ENCODE measurements at regions of chr19 and their contacts with region 1.

Region 1: DNA sequence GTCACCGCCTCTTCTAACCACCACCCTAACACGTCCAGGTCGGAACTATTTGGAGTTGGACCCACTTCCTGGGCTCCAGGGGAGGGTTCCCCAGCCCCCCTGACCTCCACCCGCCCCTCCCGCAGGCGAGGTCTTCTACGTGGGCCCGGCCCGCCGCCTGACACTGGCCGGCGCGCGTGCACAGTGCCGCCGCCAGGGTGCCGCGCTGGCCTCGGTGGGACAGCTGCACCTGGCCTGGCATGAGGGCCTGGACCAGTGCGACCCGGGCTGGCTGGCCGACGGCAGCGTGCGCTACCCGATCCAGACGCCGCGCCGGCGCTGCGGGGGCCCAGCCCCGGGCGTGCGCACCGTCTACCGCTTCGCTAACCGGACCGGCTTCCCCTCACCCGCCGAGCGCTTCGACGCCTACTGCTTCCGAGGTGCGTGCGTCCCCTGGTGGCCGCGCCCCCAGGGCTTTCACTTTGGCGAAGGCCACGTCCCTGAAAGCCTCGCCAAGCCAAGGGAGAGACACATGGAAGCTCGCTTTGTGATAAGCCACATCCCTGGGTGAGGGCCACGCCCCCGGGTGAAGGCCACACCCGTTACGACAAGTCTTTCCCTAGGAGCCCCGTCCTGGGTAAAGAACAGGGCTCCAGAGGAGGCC is 13.2 kb downstream of the NCAN start:
- DNase-seq: peak; percentile 74 to 78 (median 76)
- H3K4me3 ChIP-seq: peak overlapping the region in 1 of 2 donors; percentile 49
- H3K4me3 Mint-ChIP-seq: peak overlapping the region; percentile 70 to 93 (median 76)
- H3K27ac ChIP-seq: no peak overlapping the region
- H3K27ac Mint-ChIP-seq: peak overlapping the region in 2 of 7 donors; percentile 10 to 70
- H3K4me1 ChIP-seq: peaks cover 10% of the 10 kb centered on the region
- H3K4me1 Mint-ChIP-seq: peaks cover 0 to 5% (median 2%) of the 10 kb centered on the region in 4 donors
- H3K27me3 ChIP-seq: no peaks in the 10 kb centered on the region
- H3K27me3 Mint-ChIP-seq: peaks cover 8 to 10% of the 10 kb centered on the region in 2 donors

Region 2: DNA sequence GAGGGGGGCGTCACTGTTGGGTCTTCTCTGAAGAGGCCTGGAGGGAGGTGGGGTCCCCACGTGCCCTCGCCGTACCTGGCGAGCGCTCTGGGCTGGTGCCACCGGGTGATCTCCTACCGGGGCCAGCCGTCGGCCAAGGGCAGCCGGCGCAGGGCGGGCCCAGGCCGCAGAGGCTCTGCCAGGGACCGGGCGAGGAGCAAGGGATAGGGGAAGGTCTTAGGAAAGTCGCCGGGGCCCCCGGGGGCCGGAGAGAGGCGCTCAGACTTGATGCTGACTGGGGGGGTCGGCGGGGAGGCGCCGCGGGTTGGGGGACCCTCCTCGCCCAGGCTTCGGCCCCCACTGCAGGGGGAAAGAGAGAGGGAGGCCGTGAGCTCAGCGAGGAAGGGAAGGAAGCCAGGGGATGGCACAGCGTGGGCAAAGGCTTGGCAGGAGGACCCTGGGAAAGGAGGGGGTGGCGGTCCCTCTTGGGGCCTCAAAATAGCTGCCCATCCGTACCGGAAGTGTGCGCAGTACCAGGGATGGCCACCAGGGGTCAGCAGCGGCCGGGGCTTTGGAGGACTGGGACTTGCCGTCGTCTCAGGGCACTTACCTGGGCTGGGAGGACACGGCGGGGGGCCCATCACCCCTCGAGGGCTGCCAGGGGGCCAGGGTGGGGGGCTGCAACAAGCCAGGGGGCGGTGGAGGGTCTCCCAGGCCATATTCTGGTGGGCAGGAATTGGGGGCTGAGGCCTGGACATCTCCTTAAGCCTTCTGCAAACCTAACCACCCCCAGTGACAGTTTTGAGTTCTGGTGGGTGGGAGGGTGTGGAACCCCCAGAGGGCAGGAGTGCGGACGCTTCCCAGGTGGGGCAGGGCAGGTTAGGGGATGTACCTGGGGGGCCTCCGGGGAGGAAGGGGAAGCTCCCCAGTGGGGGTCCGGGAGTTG is 79.0 kb before region 1 on chr19:
- CTCF ChIA-PET with region 1: interaction called, 22 read pairs
- POLR2A ChIA-PET with region 1: no interaction called
- intact Hi-C with region 1: no loop called
- DNase-seq: peak; percentile 75 to 85 (median 79)
- H3K4me3 ChIP-seq: no peak overlapping the region
- H3K4me3 Mint-ChIP-seq: no peak overlapping the region
- H3K27ac ChIP-seq: no peak overlapping the region
- H3K27ac Mint-ChIP-seq: no peak overlapping the region
- H3K4me1 ChIP-seq: no peaks in the 10 kb centered on the region
- H3K4me1 Mint-ChIP-seq: no peaks in the 10 kb centered on the region
- H3K27me3 ChIP-seq: no peaks in the 10 kb centered on the region
- H3K27me3 Mint-ChIP-seq: no peaks in the 10 kb centered on the region

Region 3: GRCh38 chr19:19167612-19168011 is 57.4 kb before region 1 on chr19:
- CTCF ChIA-PET with region 1: no interaction called
- POLR2A ChIA-PET with region 1: no interaction called
- intact Hi-C with region 1: no loop called
- DNase-seq: no peak
- H3K4me3 ChIP-seq: no peak overlapping the region
- H3K4me3 Mint-ChIP-seq: no peak overlapping the region
- H3K27ac ChIP-seq: no peak overlapping the region
- H3K27ac Mint-ChIP-seq: no peak overlapping the region
- H3K4me1 ChIP-seq: peaks cover 14% of the 10 kb centered on the region
- H3K4me1 Mint-ChIP-seq: peaks cover 11 to 17% (median 14%) of the 10 kb centered on the region in 4 donors
- H3K27me3 ChIP-seq: no peaks in the 10 kb centered on the region
- H3K27me3 Mint-ChIP-seq: peaks cover 1% of the 10 kb centered on the region in 2 donors

Region 4: DNA sequence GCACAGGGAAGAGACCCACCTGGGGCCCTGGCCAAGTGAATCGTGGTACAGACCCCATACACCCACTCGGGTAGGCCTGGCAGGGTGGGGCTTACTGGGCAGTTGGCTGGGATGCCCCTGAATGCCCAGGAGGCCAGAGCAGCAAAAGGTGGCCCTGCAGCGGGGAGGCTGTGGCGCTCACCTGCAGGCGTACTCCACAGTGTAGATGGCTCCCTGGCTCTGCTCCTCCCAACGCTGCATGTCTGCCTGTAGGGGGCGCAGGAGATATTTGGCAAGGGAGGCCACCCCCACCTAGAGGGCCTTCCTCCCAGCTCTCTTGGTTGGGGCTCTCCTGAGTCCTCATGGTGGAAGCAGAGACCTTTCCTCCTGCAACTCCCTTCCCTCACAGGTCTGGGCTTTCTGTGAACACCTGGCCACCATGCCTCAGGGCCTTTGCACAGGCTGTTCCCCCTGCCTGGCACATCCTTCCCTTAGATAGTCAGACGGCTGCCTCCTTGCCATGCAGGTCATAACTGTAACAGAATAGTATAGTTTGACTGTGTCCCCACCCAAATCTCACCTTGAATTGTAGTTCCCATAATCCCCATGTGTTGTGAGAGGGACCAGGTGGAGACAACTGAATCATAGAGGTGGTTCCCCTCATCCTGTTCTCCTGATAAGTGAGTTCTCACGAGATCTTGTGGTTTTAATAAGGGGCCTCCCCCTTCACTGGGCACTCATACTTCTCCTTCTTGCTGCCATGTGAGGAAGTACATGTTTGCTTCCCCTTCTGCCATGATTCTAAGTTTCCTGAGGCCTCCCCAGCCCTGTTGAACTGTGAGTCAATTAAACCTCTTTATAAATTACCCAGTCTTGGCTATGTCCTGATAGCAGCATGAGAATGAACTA is 38.9 kb before region 1 on chr19:
- CTCF ChIA-PET with region 1: interaction called, 22 read pairs
- POLR2A ChIA-PET with region 1: no interaction called
- intact Hi-C with region 1: loop called (anchors 1 kb)
- DNase-seq: peak; percentile 64 to 69 (median 66)
- H3K4me3 ChIP-seq: no peak overlapping the region
- H3K4me3 Mint-ChIP-seq: peak overlapping the region in 2 of 8 donors; percentile 29 to 52
- H3K27ac ChIP-seq: no peak overlapping the region
- H3K27ac Mint-ChIP-seq: peak overlapping the region in 5 of 7 donors; percentile 55 to 81 (median 65)
- H3K4me1 ChIP-seq: peaks cover 21% of the 10 kb centered on the region
- H3K4me1 Mint-ChIP-seq: peaks cover 11 to 33% (median 24%) of the 10 kb centered on the region in 4 donors
- H3K27me3 ChIP-seq: no peaks in the 10 kb centered on the region
- H3K27me3 Mint-ChIP-seq: no peaks in the 10 kb centered on the region

Measured in CD4-positive, alpha-beta memory T cell (primary cell).